ENCODE measurements at regions of chr3 and their contacts with region 1.

Region 1: DNA sequence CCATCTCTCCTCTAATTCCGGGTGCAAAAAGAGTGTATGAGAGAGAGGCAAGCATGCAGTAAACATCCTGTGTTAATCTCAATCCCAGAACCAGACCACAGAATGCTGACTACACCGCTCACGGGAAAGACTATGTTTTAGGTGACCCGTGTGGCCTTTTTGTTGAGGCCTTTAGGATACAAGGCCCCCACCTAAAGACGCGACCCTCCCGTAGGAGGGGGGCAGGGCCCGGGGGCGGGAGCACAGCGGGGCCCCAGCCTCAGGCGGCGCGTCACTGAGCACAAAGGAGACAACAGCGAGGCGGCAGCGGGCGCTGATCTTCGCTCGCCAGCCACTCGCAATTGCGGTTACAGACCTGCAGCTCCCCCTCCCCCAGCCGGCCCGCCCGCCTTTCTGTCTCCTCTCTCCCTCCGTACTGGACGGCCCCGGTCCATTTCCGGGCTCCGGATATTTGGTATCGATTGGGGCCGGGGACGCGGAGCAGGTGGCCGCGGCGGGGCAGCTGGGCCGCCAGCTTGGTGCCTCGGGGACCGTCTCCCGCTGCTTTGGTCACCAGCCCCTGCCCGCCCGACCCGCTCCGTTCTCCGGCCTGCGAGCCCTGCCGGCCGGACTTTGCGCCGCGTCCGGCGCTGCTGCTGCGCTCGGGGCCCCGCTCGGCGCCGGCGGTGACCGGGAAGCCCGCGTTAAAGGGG is at the start of gene CCDC50:
- DNase-seq: peak; percentile 89 to 94
- ATAC-seq: peak; percentile 88
- H3K4me3 ChIP-seq: peak within 1 kb of the TSS; percentile 64 to 93
- H3K27ac ChIP-seq: peak within 1 kb of the TSS; percentile 58 to 90
- H3K4me1 ChIP-seq: peaks cover 1 to 5% of the 10 kb centered on the region in 2 donors
- H3K27me3 ChIP-seq: no peaks in the 10 kb centered on the region
- total RNA-seq, gene CCDC50: 95.8 to 129 TPM

Region 2: DNA sequence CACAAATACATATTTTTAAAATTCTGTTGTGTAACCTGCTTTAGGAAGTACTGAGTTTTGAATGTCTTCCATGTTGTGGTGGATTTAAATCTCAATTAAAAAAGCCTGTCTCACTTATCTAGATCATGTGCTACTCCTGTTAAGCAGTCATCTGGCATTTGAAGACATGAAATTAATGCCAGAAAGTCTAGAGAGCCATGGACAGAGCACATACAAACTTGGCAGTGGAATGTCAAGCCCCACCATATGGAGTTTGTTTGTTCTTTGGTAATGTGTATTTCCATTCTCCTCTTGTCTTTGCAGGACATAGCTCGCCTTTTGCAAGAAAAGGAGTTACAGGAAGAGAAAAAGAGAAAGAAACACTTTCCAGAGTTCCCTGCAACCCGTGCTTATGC is 40.5 kb after region 1 on chr3:
- intact Hi-C with region 1: loop called in 1 of 2 experiments (anchors 5 kb)
- DNase-seq: no peak
- ATAC-seq: no peak
- H3K4me3 ChIP-seq: no peak overlapping the region
- H3K27ac ChIP-seq: no peak overlapping the region
- H3K4me1 ChIP-seq: no peaks in the 10 kb centered on the region
- H3K27me3 ChIP-seq: no peaks in the 10 kb centered on the region

Region 3: GRCh38 chr3:191376516-191377141 is 47.5 kb after region 1 on chr3:
- intact Hi-C with region 1: loop called in 1 of 2 experiments (anchors 5 kb)
- DNase-seq: no peak
- ATAC-seq: peak; percentile 58
- H3K4me3 ChIP-seq: no peak overlapping the region
- H3K27ac ChIP-seq: peak overlapping the region in 1 of 2 donors; percentile 36
- H3K4me1 ChIP-seq: no peaks in the 10 kb centered on the region
- H3K27me3 ChIP-seq: no peaks in the 10 kb centered on the region